Esophagus squamous epithelium (tissue), 5 donors: ENCODE measurements at regions of chr22 and their contacts with region 1.

Region 1: DNA sequence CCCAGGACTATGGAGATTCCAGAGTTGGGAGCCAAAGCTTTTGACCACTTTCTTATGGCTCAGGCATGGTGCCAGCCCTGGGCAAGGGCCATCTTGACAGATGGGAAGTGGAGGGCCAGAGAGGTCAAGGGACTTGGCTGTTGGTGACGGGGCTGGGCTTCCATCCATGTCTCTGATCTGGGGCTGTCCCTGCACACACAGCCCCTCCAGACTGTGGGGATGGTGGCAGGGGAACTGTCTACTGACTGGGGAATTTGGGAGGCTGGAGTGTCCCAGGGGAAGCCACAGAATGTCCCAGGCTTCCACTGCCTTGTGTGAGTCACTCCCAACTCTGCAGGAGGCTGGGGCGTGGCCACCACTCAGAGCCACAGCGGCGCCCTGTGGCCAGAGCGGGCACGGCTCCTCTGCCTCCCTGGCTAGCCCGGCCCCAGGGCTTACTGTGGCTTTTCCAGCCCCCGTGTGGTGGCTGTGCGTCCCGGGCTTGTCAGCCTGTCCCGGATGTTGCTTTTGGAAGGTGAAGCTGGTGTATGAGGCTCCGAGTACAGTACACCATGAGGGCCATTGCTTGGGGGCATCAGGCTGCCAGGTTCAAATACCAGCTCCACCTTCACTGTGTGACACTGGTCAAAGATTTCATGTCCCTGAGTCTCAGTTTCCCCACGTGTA is 19.6 kb downstream of the C22orf23 start:
- DNase-seq: peak; percentile 31
- H3K4me3 ChIP-seq: no peak overlapping the region
- H3K27ac ChIP-seq: peak overlapping the region; percentile 76 to 90 (median 86)
- H3K4me1 ChIP-seq: peaks cover 36 to 64% (median 37%) of the 10 kb centered on the region in 3 donors
- H3K27me3 ChIP-seq: no peaks in the 10 kb centered on the region
- CTCF ChIP-seq: peak; percentile 85 to 99 (median 96)
- POLR2A ChIP-seq: no peak

Region 2: DNA sequence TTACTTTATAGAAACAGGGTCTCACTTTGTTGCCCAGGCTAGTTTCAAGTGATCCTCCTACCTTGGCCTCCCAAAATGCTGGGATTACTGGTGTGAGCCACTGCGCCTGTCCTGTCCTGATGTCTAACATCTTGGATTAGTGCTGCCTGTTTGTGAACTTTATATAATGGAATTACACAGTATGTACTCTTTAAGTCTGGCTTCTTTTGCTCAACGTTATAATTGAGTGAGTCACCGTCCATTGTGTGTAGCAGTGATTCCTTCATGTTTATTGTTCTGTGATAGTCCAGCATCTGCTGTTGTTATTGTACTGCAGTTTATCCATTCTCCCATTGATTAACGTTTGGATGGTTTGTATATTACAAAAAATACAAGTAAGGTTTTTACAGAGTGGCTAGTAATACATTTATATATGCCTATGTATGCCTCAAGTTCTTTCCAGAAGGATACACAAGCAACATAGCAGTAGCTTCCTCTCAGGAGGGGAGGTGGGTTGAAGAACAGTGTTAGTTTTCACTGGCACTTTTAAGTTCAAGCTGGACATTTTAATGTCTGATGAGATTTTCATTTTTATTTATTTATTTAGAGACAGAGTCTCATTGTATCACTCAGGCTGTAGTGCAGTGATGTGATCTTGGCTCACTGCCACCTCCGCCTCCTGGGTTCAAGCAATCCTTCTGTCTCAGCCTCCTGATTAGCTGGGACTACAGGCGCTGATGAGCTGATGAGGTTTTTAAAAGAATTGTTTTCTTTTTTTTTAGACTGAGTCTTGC is 53.0 kb before region 1 on chr22:
- intact Hi-C with region 1: loop called (anchors 5 kb)
- DNase-seq: no peak
- H3K4me3 ChIP-seq: no peak overlapping the region
- H3K27ac ChIP-seq: peak overlapping the region in 2 of 4 donors; percentile 45 to 55
- H3K4me1 ChIP-seq: peaks cover 0 to 28% (median 3%) of the 10 kb centered on the region in 3 donors
- H3K27me3 ChIP-seq: no peaks in the 10 kb centered on the region
- CTCF ChIP-seq: no peak
- POLR2A ChIP-seq: no peak